Naive thymus-derived CD8-positive, alpha-beta T cell (primary cell): ENCODE measurements at regions of chr1 and their contacts with region 1.

Region 1: DNA sequence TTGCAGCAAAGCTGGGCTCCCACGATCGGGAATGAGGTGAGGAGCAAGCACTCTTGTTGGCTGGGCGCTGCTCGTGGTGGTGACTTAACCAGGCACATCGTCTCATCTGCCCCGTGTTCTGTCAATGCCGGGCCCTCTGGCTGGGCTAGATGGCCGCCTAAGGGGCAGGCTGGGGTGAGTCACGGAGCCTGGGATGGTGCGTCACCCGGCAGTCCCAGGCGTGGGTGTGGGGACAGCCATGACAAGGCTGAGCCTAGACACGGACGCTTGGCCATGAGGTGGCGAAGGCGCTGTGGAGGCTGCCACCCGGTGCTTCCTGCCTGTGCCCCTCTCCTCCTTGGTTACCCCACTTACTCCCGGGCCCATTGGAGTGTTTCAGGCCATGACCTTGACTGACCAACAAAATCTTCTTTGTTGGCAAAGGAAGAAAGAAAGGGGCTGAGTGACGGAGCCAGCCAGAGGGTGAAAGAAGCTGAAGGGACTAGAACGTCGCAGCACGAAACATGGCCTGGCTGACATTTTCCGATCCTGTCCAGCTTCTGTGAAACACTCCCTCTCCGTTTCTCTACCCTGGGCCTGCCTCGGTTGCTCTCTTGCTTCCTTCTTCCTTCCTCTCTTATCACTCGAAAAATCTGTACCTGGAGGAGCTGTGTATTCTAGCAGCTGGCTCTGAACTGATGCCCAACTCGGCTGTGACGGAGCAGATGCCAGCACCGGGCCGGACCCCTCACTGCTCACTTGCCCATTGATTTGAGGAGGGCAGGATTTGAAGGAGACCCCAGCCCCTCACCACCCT is 596 bp downstream of the CD247 start:
- DNase-seq: peak; percentile 52 to 86 (median 70)
- ATAC-seq: peak; percentile 72 to 74
- H3K4me3 Mint-ChIP-seq: peak overlapping the region; percentile 93 to 100 (median 99)
- H3K27ac Mint-ChIP-seq: peak overlapping the region; percentile 97 to 100 (median 99)
- H3K4me1 Mint-ChIP-seq: peaks cover 13 to 53% (median 42%) of the 10 kb centered on the region in 4 donors
- H3K27me3 Mint-ChIP-seq: no peaks in the 10 kb centered on the region

Region 2: GRCh38 chr1:167430134-167430856 is 87.4 kb before region 1 on chr1:
- POLR2A ChIA-PET with region 1: interaction called, 15 read pairs
- DNase-seq: no peak
- ATAC-seq: peak; percentile 24 to 41
- H3K4me3 Mint-ChIP-seq: peak overlapping the region in 5 of 10 donors; percentile 1 to 55 (median 34)
- H3K27ac Mint-ChIP-seq: peak overlapping the region; percentile 30 to 89 (median 80)
- H3K4me1 Mint-ChIP-seq: peaks cover 8 to 77% (median 54%) of the 10 kb centered on the region in 4 donors
- H3K27me3 Mint-ChIP-seq: no peaks in the 10 kb centered on the region

Region 3: DNA sequence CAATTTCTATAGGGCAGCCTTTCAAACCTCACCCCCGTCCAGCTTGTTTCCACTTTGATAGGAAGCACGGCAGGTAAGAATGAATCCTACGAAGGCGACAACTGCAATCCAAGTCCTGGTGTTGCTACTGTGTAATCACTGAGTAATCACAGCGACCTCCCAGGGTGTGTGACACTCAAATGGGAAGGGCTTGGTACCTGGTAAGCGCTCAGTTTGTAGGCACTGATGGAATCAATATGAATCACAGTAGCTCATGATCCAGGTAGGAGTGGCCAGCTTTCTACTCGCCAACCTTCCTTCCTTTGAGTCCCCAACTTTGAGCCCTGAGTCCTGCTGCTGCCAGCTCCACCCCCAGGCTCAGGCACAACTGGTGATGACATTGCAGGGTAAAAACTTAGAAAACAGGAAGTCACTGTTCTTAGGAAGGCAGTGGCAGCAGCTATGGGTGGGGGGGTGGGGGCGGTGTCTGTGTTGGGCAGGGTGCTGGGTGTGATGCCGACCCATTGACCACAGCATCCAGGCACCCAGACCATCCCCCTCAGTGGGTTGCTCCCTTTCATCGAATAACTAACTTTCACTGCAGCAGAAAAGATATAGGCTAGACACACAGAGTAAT is 70.1 kb before region 1 on chr1:
- POLR2A ChIA-PET with region 1: interaction called, 124 read pairs
- DNase-seq: peak; percentile 47 to 82 (median 74)
- ATAC-seq: peak; percentile 77 to 90
- H3K4me3 Mint-ChIP-seq: peak overlapping the region; percentile 70 to 88 (median 82)
- H3K27ac Mint-ChIP-seq: peak overlapping the region; percentile 90 to 99 (median 98)
- H3K4me1 Mint-ChIP-seq: peaks cover 43 to 92% (median 86%) of the 10 kb centered on the region in 4 donors
- H3K27me3 Mint-ChIP-seq: no peaks in the 10 kb centered on the region

Region 4: GRCh38 chr1:167474191-167474716 is 43.5 kb before region 1 on chr1:
- POLR2A ChIA-PET with region 1: interaction called, 47 read pairs
- DNase-seq: peak in 8 of 10 donors; percentile 37 to 71 (median 58)
- ATAC-seq: peak; percentile 82 to 83
- H3K4me3 Mint-ChIP-seq: peak overlapping the region; percentile 70 to 91 (median 82)
- H3K27ac Mint-ChIP-seq: peak overlapping the region; percentile 70 to 95 (median 88)
- H3K4me1 Mint-ChIP-seq: peaks cover 42 to 92% (median 86%) of the 10 kb centered on the region in 4 donors
- H3K27me3 Mint-ChIP-seq: no peaks in the 10 kb centered on the region

Region 5: DNA sequence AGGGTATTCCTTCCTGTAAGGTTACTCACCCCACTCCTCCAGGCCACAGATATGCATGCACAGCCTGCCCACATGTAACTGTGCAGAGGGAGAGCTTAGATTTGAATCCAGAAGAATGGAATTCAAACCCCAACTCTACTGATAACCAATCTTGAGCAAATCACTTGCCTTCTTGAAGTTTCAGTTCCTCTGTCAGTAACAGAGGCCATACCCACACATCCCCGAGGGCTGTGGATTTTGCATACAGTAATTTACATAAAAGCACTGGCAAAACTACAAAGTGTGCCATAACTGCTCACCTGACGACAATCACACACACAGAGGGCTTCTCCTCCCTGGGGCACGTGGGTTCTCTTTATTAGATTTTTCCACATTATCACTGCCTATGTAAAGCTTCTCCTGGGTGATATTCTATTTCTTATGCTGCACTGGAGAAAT is 18.1 kb before region 1 on chr1:
- POLR2A ChIA-PET with region 1: interaction called, 42 read pairs
- DNase-seq: peak in 3 of 10 donors; percentile 37 to 46 (median 37)
- ATAC-seq: peak; percentile 71 to 88
- H3K4me3 Mint-ChIP-seq: peak overlapping the region; percentile 10 to 73 (median 48)
- H3K27ac Mint-ChIP-seq: peak overlapping the region; percentile 61 to 97 (median 80)
- H3K4me1 Mint-ChIP-seq: peaks cover 66 to 100% (median 95%) of the 10 kb centered on the region in 4 donors
- H3K27me3 Mint-ChIP-seq: peaks cover 0 to 2% (median 0%) of the 10 kb centered on the region in 5 donors

Region 6: DNA sequence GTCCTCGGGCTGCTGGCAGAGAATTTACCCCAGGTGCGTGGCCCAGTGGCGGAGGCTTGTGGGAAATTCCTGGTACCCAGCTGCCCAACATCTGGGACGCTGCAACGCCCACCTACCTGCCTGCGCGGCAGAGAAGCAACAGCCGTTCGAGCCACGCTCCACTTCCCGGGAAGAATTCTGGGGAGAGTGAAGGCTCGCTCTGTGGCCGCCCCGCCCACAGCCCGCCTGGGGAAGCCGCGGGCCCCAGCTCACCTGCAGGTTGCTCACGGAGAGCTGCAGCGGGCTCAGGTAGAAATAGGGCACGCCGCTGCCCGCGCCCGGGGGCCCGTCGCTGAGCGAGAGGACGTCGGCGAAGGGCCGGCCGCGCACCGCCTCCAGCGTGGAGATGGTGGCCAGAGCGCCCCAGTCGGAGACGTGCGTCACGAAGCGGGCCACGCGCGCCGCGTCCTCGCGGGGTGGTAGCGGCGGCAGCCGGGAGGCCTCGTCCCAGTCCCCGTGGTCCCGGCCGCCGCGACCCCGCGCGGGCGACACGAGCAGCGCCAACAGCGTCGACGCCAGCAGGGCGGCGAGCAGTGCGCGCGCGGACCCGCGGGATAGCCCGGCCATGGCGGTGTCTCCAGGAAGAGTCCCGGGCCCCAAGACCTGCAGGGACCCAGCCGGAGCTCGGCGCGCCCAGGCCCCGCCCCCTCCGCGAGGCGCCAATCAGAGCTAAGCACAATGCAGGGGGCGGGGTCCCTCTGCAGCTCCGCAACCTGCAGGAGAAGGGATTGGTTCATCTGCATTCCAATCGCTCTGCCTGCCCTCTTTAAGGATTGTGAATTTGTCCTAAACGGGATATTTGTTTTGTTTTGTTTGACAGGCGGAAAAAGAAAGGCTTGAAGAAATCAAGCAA is 35.6 kb after region 1 on chr1 and contains the start of gene CREG1:
- POLR2A ChIA-PET with region 1: interaction called, 17 read pairs
- DNase-seq: peak; percentile 81 to 93 (median 87)
- ATAC-seq: peak; percentile 97
- H3K4me3 Mint-ChIP-seq: peak within 1 kb of the TSS; percentile 81 to 96 (median 93)
- H3K27ac Mint-ChIP-seq: peak within 1 kb of the TSS; percentile 40 to 91 (median 79)
- H3K4me1 Mint-ChIP-seq: peaks cover 21 to 51% (median 43%) of the 10 kb centered on the region in 4 donors
- H3K27me3 Mint-ChIP-seq: peaks cover 0 to 1% (median 0%) of the 10 kb centered on the region in 5 donors
- polyA plus RNA-seq, gene CREG1: 14.6 to 26.8 (median 23.3) TPM